ENCODE measurements at regions of chr2 and their contacts with region 1.

Region 1: DNA sequence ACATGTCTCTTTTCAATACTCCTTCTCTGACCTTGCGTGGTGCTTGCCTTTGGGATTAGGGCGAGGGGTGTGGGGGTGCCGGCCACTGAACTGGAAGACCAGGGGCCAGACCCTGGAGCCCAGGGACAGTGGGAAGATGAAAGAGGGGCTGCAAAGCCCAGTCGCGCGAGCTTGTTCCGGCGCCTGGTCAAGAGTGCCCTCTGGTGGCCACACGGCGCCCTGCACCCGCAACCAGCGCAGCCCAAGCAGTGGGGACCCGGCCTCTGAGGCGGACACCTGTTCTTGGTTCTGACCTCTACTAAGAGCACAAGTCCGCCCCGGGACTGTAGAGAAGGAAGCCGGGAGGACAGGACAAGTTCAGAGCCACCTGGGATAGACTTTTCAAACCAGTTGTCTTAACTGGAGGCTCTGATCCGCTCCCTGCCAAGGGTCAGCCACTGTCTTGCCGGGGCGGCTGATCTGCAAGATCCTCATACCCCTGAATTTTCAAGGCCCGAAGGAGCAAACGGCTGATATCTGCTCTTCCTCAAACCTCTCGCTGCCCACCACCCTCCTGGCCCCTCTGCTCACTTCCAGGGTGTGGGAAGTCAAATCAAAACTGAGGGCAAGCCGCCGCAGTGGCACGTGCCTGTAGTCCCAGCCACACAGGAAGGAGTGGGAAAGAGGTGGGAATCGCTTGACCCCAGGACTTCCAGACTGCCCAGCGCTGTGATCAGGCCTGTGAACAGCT is 14.9 kb upstream of the MSH6 start:
- DNase-seq: peak; percentile 55 to 64
- H3K4me3 ChIP-seq: no peak overlapping the region
- H3K27ac ChIP-seq: no peak overlapping the region
- H3K4me1 ChIP-seq: no peaks in the 10 kb centered on the region
- H3K27me3 ChIP-seq: no peaks in the 10 kb centered on the region
- CTCF ChIP-seq: peak; percentile 85 to 99 (median 93)
- POLR2A ChIP-seq: no peak

Region 2: DNA sequence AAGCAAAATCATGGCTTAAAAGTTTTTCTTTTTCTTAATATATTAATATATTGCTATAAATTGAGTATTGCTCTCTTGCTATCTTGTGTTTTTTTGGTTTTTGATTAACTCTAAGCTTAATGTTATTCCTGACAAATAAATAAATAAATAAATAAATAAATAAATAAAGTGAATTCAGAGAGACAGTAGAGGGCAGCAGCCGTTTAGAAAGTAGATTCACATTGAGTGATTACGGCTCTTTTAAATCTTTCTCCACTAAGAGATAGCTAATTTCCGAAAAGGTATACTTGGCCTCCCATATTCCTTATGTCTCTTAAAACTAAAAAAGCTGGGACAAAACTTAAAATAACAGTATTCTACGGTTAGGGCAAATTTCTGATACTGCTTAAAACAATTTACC is 330.8 kb before region 1 on chr2:
- intact Hi-C with region 1: loop called (anchors 5 kb)
- DNase-seq: no peak
- H3K4me3 ChIP-seq: no peak overlapping the region
- H3K27ac ChIP-seq: no peak overlapping the region
- H3K4me1 ChIP-seq: peaks cover 0 to 10% of the 10 kb centered on the region in 2 donors
- H3K27me3 ChIP-seq: no peaks in the 10 kb centered on the region
- CTCF ChIP-seq: peak in 4 of 6 experiments; percentile 24 to 63 (median 47)
- POLR2A ChIP-seq: no peak